ENCODE measurements at regions of chr15 and their contacts with region 1.

Region 1: GRCh38 chr15:63560741-63561448 is 36.3 kb upstream of the FBXL22 start:
- DNase-seq: peak; percentile 78
- H3K4me3 Mint-ChIP-seq: no peak overlapping the region
- H3K27ac Mint-ChIP-seq: peak overlapping the region; percentile 55
- H3K4me1 Mint-ChIP-seq: peaks cover 40% of the 10 kb centered on the region
- H3K27me3 Mint-ChIP-seq: no peaks in the 10 kb centered on the region

Region 2: GRCh38 chr15:63381301-63382204 is 179.3 kb before region 1 on chr15 and contains the start of gene CA12:
- CTCF ChIA-PET with region 1: no interaction called
- intact Hi-C with region 1: no loop called
- DNase-seq: peak; percentile 33
- H3K4me3 Mint-ChIP-seq: peak within 1 kb of the TSS; percentile 68
- H3K27ac Mint-ChIP-seq: no peak within 1 kb of the TSS
- H3K4me1 Mint-ChIP-seq: peaks cover 25% of the 10 kb centered on the region
- H3K27me3 Mint-ChIP-seq: peaks cover 64% of the 10 kb centered on the region
- total RNA-seq, gene CA12: 0.12 TPM in 1 of 2 experiments, not detected in the other

Region 3: GRCh38 chr15:63473999-63474809 is 86.7 kb before region 1 on chr15:
- CTCF ChIA-PET with region 1: no interaction called
- intact Hi-C with region 1: loop called (anchors 1 kb)
- DNase-seq: peak; percentile 88
- H3K4me3 Mint-ChIP-seq: no peak overlapping the region
- H3K27ac Mint-ChIP-seq: peak overlapping the region; percentile 89
- H3K4me1 Mint-ChIP-seq: peaks cover 53% of the 10 kb centered on the region
- H3K27me3 Mint-ChIP-seq: no peaks in the 10 kb centered on the region

Region 4: DNA sequence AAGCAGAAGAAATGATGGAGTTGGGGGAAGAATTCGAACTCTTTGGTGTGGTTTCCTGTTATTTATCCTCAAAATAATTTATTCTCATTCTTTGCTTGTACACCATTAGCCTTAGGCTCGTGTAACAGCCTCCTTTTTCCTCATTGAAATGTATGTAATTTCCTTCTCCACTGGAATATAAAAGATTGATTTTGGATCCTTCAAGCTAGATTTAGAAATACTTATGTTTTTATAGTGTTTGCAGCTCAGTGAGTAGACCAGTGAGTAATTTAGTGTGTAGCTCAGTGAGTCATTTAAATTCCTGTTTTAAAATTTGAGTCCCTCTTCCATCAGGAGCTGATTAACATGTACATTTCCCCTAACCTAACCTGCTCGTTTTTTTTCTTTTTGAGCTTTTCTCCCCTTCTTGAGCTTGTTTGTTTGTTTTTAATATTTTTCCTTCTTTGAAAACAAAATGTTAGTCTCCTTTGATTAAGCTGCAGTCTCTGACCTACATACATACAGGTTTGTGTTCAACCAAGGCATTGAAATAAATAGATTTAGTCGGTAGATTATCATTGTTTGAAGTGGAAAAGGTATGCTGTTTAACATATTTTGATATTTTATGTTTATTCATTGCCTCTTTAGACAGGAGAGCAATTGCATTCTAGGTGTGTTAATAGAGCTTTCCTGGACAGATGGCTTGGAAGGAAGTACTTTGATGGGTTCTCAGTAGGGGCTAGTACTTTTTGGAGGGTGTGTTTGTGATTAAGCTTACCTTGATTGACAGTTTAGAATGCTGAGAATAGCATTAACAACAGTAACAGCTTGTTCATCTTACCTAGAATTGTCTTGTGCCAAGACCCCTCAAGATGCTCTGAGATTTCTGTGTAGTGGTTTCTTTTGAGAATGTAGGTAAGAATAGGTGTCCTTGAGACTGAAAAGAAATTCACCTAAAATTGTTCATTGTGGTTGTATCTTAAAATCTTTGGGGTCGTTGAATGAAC is 50.6 kb before region 1 on chr15:
- CTCF ChIA-PET with region 1: interaction called, 3 read pairs
- intact Hi-C with region 1: loop called (anchors 2 kb)
- DNase-seq: no peak
- H3K4me3 Mint-ChIP-seq: peak overlapping the region; percentile 69
- H3K27ac Mint-ChIP-seq: peak overlapping the region; percentile 85
- H3K4me1 Mint-ChIP-seq: peaks cover 86% of the 10 kb centered on the region
- H3K27me3 Mint-ChIP-seq: no peaks in the 10 kb centered on the region

Region 5: DNA sequence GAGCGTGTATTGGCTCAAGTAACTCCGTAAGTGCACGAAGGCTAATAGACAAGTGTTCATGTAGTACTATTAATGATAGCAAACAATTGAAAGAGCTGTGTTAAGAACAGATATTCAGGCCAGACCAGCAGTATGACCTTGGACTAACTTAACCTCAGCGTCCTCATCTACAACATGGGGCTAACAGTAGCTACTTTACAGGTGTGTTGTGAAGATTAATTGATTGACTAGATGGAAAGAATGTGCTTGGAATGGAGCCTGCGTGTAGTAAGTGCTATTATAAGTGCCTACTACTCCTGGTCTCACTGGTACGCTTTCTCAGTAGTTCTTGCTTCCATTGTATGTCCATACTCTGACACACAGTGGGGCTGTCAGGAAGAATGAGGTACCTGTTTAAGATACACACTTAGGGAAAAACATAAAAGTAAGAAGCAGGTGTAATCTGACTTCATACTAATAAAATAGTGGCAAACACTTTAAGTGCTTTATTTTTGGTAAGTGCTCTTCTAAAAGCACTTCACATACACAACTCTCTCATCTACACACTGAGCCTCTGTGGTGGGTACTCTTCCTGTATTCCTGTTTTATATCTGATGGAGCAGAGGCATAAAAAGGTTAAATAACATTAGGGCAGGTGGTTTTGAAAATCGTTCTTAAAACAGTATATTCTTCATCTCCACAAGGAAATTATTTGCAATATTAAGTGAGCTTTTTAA is 12.0 kb after region 1 on chr15:
- CTCF ChIA-PET with region 1: no interaction called
- intact Hi-C with region 1: no loop called
- DNase-seq: no peak
- H3K4me3 Mint-ChIP-seq: no peak overlapping the region
- H3K27ac Mint-ChIP-seq: no peak overlapping the region
- H3K4me1 Mint-ChIP-seq: peaks cover 19% of the 10 kb centered on the region
- H3K27me3 Mint-ChIP-seq: no peaks in the 10 kb centered on the region

Region 6: GRCh38 chr15:63593705-63594671 is 33.1 kb after region 1 on chr15:
- CTCF ChIA-PET with region 1: no interaction called
- intact Hi-C with region 1: loop called (anchors 2 kb)
- DNase-seq: peak; percentile 64
- H3K4me3 Mint-ChIP-seq: no peak overlapping the region
- H3K27ac Mint-ChIP-seq: peak overlapping the region; percentile 70
- H3K4me1 Mint-ChIP-seq: peaks cover 68% of the 10 kb centered on the region
- H3K27me3 Mint-ChIP-seq: no peaks in the 10 kb centered on the region

Measured in activated naive CD4-positive, alpha-beta T cell treated with anti-CD3 and anti-CD28 coated beads for 36 hours (primary cell).